ENCODE measurements at regions of chr6 and their contacts with region 1.

Region 1: GRCh38 chr6:37232430-37233017 is 25.0 kb upstream of the TBC1D22B start:
- DNase-seq: no peak
- H3K4me3 ChIP-seq: no peak overlapping the region
- H3K4me3 Mint-ChIP-seq: no peak overlapping the region
- H3K27ac Mint-ChIP-seq: peak overlapping the region; percentile 2
- H3K4me1 ChIP-seq: peaks cover 11% of the 10 kb centered on the region
- H3K4me1 Mint-ChIP-seq: peaks cover 12% of the 10 kb centered on the region
- H3K27me3 ChIP-seq: no peaks in the 10 kb centered on the region
- H3K27me3 Mint-ChIP-seq: no peaks in the 10 kb centered on the region
- CTCF ChIP-seq: no peak

Region 2: GRCh38 chr6:36759148-36759759 is 473.3 kb before region 1 on chr6:
- CTCF ChIA-PET with region 1: interaction called, 10 read pairs
- POLR2A ChIA-PET with region 1: no interaction called
- intact Hi-C with region 1: no loop called
- DNase-seq: peak; percentile 75 to 87
- H3K4me3 ChIP-seq: no peak overlapping the region
- H3K4me3 Mint-ChIP-seq: no peak overlapping the region
- H3K27ac Mint-ChIP-seq: no peak overlapping the region
- H3K4me1 ChIP-seq: no peaks in the 10 kb centered on the region
- H3K4me1 Mint-ChIP-seq: peaks cover 13% of the 10 kb centered on the region
- H3K27me3 ChIP-seq: no peaks in the 10 kb centered on the region
- H3K27me3 Mint-ChIP-seq: peaks cover 2% of the 10 kb centered on the region
- CTCF ChIP-seq: peak; percentile 94 to 99

Region 3: GRCh38 chr6:38234934-38235682 is 1002.6 kb after region 1 on chr6:
- CTCF ChIA-PET with region 1: no interaction called
- POLR2A ChIA-PET with region 1: no interaction called
- intact Hi-C with region 1: no loop called
- DNase-seq: no peak
- H3K4me3 ChIP-seq: no peak overlapping the region
- H3K4me3 Mint-ChIP-seq: no peak overlapping the region
- H3K27ac Mint-ChIP-seq: no peak overlapping the region
- H3K4me1 ChIP-seq: no peaks in the 10 kb centered on the region
- H3K4me1 Mint-ChIP-seq: no peaks in the 10 kb centered on the region
- H3K27me3 ChIP-seq: no peaks in the 10 kb centered on the region
- H3K27me3 Mint-ChIP-seq: no peaks in the 10 kb centered on the region
- CTCF ChIP-seq: no peak

Measured in Caco-2 (cell line).